Activated T-helper 1 cell treated with anti-CD3 and anti-CD28 coated beads, Interleukin-12 subunit alpha, Interleukin-12 subunit beta, Interleukin-2, Interleukin-4 antibody, amounts not matched to agents 30 ng/mL and 10 ng/mL and 1 ng/mL, durations not matched to agents 14 hours and 24 hours and 36 hours (primary cell): ENCODE measurements at regions of chr22 and their contacts with region 1.

Region 1: DNA sequence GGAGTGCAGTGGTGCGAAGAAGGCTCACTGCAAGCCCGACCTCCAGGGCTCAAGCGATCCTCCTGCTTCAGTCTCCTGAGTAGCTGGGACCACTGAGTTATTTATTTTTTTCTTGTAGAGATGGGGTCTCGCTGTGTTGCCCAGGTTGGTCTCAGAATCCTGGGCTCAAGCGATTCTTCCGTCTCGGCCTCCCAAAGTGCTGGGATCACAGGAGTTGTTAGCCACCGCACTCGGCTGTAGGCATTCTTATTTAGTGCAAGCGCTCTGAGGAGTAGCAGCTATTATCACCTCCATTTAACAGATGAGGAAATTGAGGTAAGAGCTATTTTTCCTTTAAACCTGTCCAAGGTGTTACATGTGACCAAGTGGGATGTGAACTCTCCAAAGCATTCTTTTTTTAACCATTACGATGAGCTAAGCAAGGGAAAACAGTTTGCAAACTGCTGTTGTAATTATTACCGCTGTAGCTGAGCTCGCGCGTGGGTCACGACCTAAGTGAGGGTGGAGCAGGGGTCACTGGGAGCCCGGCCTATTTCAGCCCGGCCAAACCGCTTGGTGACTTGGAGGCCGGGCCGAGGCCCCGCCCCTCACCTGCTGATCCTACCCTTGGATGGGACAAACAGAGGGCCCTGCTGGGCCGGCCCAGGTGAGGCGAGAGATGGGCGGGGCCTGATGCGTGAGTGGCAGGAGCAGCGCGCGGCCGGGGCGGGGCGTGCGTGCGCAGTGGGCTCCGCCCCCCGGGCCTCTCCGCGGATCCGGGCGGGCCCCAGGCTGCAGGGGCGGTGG is 449 bp upstream of the KREMEN1 start:
- DNase-seq: peak; percentile 77
- H3K4me3 Mint-ChIP-seq: peak overlapping the region; percentile 68
- H3K27ac Mint-ChIP-seq: no peak overlapping the region
- H3K4me1 Mint-ChIP-seq: peaks cover 18% of the 10 kb centered on the region
- H3K27me3 Mint-ChIP-seq: peaks cover 65% of the 10 kb centered on the region

Region 2: GRCh38 chr22:28741758-28742561 is 330.4 kb before region 1 on chr22 and contains the starts of genes CHEK2 and HSCB:
- intact Hi-C with region 1: loop called (anchors 2 kb)
- DNase-seq: peak; percentile 97
- H3K4me3 Mint-ChIP-seq: peak within 1 kb of the TSS; percentile 86
- H3K27ac Mint-ChIP-seq: peak within 1 kb of the TSS; percentile 70
- H3K4me1 Mint-ChIP-seq: peaks cover 42% of the 10 kb centered on the region
- H3K27me3 Mint-ChIP-seq: no peaks in the 10 kb centered on the region
- total RNA-seq, gene CHEK2: 31.4 and 35.0 TPM in 2 replicates
- total RNA-seq, gene HSCB: 16.6 and 18.0 TPM in 2 replicates